PC-3 (cell line): ENCODE measurements at regions of chr3 and their contacts with region 1.

Region 1: DNA sequence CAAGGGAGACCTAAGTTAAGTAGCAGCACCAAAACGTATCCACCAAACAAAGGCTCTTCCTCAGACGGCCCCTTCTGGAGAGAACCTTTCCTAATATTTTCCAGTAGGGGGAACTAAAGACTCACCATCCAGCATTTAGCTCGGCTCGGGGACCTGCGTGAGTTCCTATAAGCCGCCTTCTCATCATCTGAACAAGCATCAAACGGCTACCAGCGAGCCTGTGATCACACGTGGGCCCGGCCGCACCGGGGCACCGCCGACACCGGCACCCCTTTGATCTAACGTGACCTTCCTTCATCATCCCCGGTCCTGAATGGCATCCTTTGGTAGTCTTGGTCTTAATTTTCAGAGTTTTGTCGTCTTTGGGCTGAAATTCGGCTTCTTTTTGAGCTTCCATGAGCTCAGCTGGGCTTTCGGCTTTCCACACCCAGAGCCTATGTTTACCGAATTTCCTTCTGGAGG is 1.4 kb upstream of the ROBO2 start:
- DNase-seq: peak; percentile 83
- ATAC-seq: peak; percentile 97
- H3K4me3 ChIP-seq: peak overlapping the region; percentile 29; the same call in 1 of the 2 replicates
- H3K27ac ChIP-seq: no peak overlapping the region
- H3K4me1 ChIP-seq: no peaks in the 10 kb centered on the region
- H3K27me3 ChIP-seq: peaks cover 72% of the 10 kb centered on the region
- CTCF ChIP-seq: peak; percentile 77

Region 2: GRCh38 chr3:76776927-76777326 is 261.6 kb before region 1 on chr3:
- CTCF ChIA-PET with region 1: no interaction called
- POLR2A ChIA-PET with region 1: no interaction called
- intact Hi-C with region 1: no loop called
- DNase-seq: no peak
- ATAC-seq: no peak
- H3K4me3 ChIP-seq: no peak overlapping the region
- H3K27ac ChIP-seq: no peak overlapping the region
- H3K4me1 ChIP-seq: no peaks in the 10 kb centered on the region
- H3K27me3 ChIP-seq: no peaks in the 10 kb centered on the region
- CTCF ChIP-seq: no peak

Region 3: DNA sequence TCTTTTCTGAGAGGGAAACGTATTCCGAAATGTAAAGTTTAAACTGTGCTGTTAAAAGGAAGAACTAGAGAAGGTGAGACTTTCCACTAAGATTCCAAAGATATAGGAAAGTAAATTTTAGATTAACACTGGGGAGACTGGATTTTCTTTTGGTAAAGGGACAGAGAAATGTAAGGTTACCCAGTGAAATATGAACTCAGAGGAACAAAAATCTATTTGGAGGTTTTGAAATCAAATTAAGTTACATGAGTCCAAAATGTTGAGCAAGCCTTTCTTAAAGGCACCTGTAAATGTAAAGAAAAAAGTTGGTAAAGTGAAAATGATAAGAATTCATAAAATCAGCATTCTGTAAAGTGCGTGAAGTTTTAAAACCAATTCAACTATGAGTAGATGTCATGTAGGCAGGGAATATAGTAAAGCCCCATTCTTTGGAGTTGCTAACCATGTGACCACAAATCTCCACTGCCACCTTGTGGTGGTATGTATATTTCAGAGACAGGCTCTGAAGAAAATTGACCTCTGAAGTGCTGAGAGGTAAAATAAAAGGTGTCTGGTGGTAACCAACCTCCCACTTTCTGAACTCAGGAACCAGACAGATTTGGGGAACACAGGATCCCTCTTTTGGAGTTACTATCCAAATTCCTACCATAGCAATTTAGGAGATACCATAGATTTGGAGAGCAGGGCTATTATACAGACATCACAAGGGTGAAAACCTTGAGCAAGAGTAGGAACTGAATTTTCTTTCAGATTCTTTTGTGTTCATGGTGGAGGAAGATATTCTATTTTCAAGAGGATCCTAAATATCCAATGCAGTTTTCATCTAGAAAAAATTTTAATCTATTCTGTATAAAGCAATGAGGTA is 216.7 kb after region 1 on chr3:
- CTCF ChIA-PET with region 1: no interaction called
- POLR2A ChIA-PET with region 1: no interaction called
- intact Hi-C with region 1: loop called (anchors 1 kb)
- DNase-seq: peak; percentile 80
- ATAC-seq: peak; percentile 83
- H3K4me3 ChIP-seq: no peak overlapping the region
- H3K27ac ChIP-seq: no peak overlapping the region
- H3K4me1 ChIP-seq: no peaks in the 10 kb centered on the region
- H3K27me3 ChIP-seq: peaks cover 57% of the 10 kb centered on the region
- CTCF ChIP-seq: peak; percentile 86

Region 4: DNA sequence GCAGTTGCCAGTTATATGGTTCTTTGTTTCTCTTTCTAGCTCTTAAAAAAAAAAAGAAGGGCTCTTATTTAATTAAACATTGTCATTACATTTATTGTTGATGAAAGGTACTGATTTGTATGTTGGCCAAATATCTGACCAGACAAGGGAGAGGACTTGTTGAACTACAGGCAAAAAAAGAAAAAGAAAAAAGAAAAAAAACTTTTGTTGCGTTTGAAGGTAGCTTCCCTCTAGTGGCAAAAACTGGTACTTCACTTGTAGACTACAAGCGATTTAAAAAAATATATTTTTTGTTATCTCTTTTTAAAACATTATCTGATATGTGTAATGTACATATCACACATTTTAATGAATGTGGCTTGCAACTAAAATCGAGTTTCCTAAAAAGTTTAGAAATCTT is 282.0 kb after region 1 on chr3:
- CTCF ChIA-PET with region 1: interaction called, 9 read pairs
- POLR2A ChIA-PET with region 1: no interaction called
- intact Hi-C with region 1: loop called (anchors 2 kb)
- DNase-seq: peak; percentile 69
- ATAC-seq: no peak
- H3K4me3 ChIP-seq: no peak overlapping the region
- H3K27ac ChIP-seq: no peak overlapping the region
- H3K4me1 ChIP-seq: peaks cover 11% of the 10 kb centered on the region
- H3K27me3 ChIP-seq: peaks cover 6% of the 10 kb centered on the region
- CTCF ChIP-seq: peak; percentile 75